ENCODE measurements at regions of chr10 and their contacts with region 1.

Region 1: DNA sequence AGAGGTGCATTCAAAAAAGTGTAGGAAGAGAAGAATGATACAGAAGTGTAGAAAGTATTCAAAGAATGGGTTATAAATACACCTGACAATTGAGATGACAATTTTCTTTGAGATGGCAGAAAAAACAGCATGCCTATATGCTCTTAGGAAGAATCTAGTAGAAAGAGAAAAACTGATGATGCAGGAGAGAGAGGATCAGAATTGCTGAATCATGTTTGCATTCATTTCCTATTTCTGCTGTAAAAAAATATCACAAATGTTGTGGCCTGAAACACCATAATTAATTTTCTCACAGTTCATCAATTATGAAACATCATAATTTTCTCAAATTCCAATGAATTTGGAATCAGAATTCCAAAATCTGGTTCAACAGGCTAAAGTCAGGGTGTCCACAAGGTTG is 9.8 kb upstream of the AKR1C1 start:
- DNase-seq: no peak
- ATAC-seq: no peak
- H3K4me3 Mint-ChIP-seq: no peak overlapping the region
- H3K27ac Mint-ChIP-seq: no peak overlapping the region
- H3K4me1 Mint-ChIP-seq: no peaks in the 10 kb centered on the region
- H3K27me3 Mint-ChIP-seq: no peaks in the 10 kb centered on the region

Region 2: DNA sequence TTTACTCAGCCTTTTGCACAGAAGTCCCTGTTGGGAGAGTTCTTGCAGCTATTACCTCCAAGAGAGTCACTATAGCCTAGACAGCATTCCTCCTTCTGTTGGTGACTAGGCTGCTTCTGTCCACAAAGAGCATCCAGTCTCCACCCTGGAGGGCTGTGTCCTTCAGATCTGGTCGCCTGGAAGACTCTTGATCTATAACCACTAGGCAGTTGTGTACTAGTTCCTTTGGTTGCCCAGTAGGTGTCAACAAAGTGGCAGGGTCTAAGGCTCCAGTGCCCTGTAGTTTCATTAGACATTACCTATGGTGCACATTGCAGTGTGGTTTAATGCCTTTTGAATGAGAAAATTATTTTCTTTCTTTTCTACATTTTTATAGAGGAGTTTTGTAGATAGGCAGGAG is 61.5 kb after region 1 on chr10:
- CTCF ChIA-PET with region 1: no interaction called
- POLR2A ChIA-PET with region 1: no interaction called
- intact Hi-C with region 1: loop called (anchors 1 kb)
- DNase-seq: no peak
- ATAC-seq: no peak
- H3K4me3 Mint-ChIP-seq: no peak overlapping the region
- H3K27ac Mint-ChIP-seq: no peak overlapping the region
- H3K4me1 Mint-ChIP-seq: no peaks in the 10 kb centered on the region
- H3K27me3 Mint-ChIP-seq: no peaks in the 10 kb centered on the region

Region 3: GRCh38 chr10:5030989-5031388 is 77.6 kb after region 1 on chr10:
- CTCF ChIA-PET with region 1: no interaction called
- POLR2A ChIA-PET with region 1: no interaction called
- intact Hi-C with region 1: no loop called
- DNase-seq: no peak
- ATAC-seq: no peak
- H3K4me3 Mint-ChIP-seq: no peak overlapping the region
- H3K27ac Mint-ChIP-seq: no peak overlapping the region
- H3K4me1 Mint-ChIP-seq: no peaks in the 10 kb centered on the region
- H3K27me3 Mint-ChIP-seq: peaks cover 6% of the 10 kb centered on the region